ENCODE measurements at regions of chr10 and their contacts with region 1.

Region 1: DNA sequence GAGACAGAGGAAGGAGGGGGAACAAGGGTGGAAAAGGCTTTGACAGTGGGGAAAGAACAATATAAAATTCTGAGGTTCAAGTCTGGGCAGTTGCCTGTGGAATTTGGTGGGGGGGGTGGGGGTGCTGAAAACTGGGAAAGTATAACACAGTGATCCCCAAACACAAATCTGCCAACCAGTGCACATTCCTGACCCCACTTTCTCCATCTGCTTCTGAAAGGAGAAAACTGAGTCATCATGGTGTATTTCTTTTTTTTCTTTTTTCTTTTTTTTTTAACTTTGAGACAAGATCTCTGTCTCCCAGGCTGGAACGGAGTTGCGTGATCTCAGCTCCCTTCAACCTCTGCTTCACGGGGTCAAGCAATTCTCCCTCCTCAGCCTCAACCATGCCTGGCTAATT is 4.4 kb upstream of the ITIH5 start:
- DNase-seq: no peak
- ATAC-seq: no peak
- H3K4me3 ChIP-seq: no peak overlapping the region
- H3K27ac ChIP-seq: no peak overlapping the region
- H3K4me1 ChIP-seq: no peaks in the 10 kb centered on the region; the same call in 1 of the 2 replicates
- H3K27me3 ChIP-seq: peaks cover 7% of the 10 kb centered on the region
- CTCF ChIP-seq: no peak

Region 2: GRCh38 chr10:7161484-7162250 is 509.5 kb before region 1 on chr10:
- CTCF ChIA-PET with region 1: no interaction called
- POLR2A ChIA-PET with region 1: no interaction called
- in situ Hi-C with region 1: no loop called
- intact Hi-C with region 1: no loop called
- DNase-seq: no peak
- ATAC-seq: no peak
- H3K4me3 ChIP-seq: no peak overlapping the region
- H3K27ac ChIP-seq: no peak overlapping the region
- H3K4me1 ChIP-seq: no peaks in the 10 kb centered on the region
- H3K27me3 ChIP-seq: no peaks in the 10 kb centered on the region; the same call in 1 of the 2 replicates
- CTCF ChIP-seq: no peak

Region 3: DNA sequence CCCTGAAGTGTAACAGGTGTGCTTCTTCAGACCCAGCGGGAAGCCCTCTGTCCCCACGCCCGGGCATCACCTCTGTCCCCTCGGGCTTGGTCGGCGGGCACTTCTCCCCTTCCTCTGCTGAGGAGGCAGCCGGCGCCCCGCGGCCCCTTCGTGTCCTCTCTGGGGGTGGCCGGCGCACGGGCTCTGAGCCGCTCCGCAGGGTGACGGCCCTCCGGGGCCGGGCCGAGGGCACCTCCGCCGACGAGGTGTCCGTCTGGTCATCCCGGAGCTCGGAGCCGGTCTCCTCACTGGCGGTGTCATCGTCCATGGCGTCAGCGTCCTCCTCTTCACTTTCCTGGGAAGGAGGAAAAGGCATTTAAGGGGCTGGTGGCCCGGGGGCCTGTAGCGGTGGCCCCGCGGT is 499.3 kb before region 1 on chr10:
- CTCF ChIA-PET with region 1: no interaction called
- POLR2A ChIA-PET with region 1: no interaction called
- in situ Hi-C with region 1: no loop called
- intact Hi-C with region 1: no loop called
- DNase-seq: no peak
- ATAC-seq: no peak
- H3K4me3 ChIP-seq: no peak overlapping the region
- H3K27ac ChIP-seq: no peak overlapping the region
- H3K4me1 ChIP-seq: no peaks in the 10 kb centered on the region
- H3K27me3 ChIP-seq: no peaks in the 10 kb centered on the region
- CTCF ChIP-seq: no peak

Region 4: DNA sequence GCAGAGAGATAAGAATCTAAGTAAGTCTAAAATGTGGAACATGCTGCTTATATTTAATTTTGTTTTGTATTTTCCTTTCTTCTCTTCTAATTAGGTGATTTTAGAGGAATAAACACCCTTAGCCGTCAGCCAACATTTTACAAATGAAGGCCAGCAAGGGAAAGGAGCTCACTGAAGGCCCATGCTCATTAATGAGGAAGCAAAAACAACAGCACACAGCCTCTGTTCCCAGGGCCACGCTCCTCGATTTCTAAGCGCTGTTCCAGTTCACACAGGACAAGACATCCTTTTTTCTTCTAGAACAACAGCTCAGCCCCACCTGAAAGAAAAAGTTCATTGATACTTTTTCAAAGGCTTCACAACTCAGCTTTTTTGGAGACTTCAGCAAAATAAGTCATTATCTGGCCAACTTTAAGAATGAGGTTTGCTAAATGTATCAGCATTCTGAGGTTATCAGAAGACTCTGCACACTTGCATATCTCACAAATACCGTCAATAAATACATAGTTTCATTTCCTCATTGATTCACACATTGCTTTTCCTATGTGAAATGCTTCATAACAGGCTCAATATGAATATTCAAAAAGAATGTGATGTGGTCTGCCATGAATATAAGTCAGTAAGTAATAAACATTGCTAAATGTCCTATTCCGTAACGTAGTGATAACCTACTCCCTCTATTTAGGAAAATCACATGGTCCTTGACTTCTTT is 225.5 kb before region 1 on chr10:
- CTCF ChIA-PET with region 1: no interaction called
- POLR2A ChIA-PET with region 1: no interaction called
- in situ Hi-C with region 1: no loop called
- intact Hi-C with region 1: no loop called
- DNase-seq: no peak
- ATAC-seq: no peak
- H3K4me3 ChIP-seq: no peak overlapping the region
- H3K27ac ChIP-seq: no peak overlapping the region
- H3K4me1 ChIP-seq: no peaks in the 10 kb centered on the region
- H3K27me3 ChIP-seq: no peaks in the 10 kb centered on the region
- CTCF ChIP-seq: no peak

Region 5: GRCh38 chr10:7610651-7611389 is 60.3 kb before region 1 on chr10:
- CTCF ChIA-PET with region 1: no interaction called
- POLR2A ChIA-PET with region 1: no interaction called
- in situ Hi-C with region 1: no loop called
- intact Hi-C with region 1: no loop called
- DNase-seq: no peak
- ATAC-seq: no peak
- H3K4me3 ChIP-seq: no peak overlapping the region
- H3K27ac ChIP-seq: no peak overlapping the region
- H3K4me1 ChIP-seq: no peaks in the 10 kb centered on the region
- H3K27me3 ChIP-seq: no peaks in the 10 kb centered on the region
- CTCF ChIP-seq: no peak

Region 6: DNA sequence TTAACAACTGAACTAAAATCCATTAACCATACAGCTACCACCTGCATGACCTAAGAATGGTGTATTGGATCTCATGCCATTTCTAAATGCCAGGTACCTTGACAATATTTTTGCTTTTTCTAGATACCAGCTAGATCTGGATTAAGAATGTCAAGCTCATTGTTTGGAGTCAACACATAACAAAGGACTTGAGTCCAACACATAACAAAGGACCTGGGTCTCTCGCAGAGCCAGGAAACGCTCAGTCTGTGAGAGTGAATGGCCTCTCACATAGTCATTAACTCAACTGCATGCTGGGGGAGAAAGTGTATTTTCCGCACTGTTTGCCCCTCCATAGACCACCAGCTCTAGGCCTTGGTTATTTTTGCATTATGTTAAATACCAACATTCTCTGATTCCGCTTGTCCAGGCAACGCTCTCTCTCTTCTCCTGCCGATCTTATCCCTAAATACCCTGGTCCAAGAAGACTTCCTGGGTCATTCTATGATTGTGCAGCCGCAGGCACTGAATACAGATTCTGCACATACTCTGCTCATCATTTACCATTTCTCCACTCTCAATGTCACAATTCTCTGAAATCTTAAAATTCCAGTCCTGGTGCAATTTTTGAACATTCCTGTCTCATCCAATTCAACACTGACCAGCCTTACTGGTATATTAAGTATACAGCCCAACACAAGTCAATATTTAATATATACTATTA is 35.6 kb before region 1 on chr10:
- CTCF ChIA-PET with region 1: no interaction called
- POLR2A ChIA-PET with region 1: no interaction called
- in situ Hi-C with region 1: no loop called
- intact Hi-C with region 1: loop called (anchors 2 kb)
- DNase-seq: no peak
- ATAC-seq: no peak
- H3K4me3 ChIP-seq: no peak overlapping the region
- H3K27ac ChIP-seq: no peak overlapping the region
- H3K4me1 ChIP-seq: no peaks in the 10 kb centered on the region
- H3K27me3 ChIP-seq: peaks cover 2% of the 10 kb centered on the region; the same call in 1 of the 2 replicates
- CTCF ChIP-seq: no peak

Measured in Panc1 (cell line).